Activated CD8-positive, alpha-beta T cell treated with anti-CD3 and anti-CD28 coated beads, Interleukin-2, amount 10 ng/mL, durations not matched to agents 7 days and 5 days (primary cell): ENCODE measurements at regions of chr5 and their contacts with region 1.

Region 1: GRCh38 chr5:154072414-154073171 is 33.8 kb downstream of the MFAP3 start:
- DNase-seq: peak; percentile 91
- ATAC-seq: peak; percentile 89
- H3K4me3 Mint-ChIP-seq: peak overlapping the region; percentile 47
- H3K27ac Mint-ChIP-seq: peak overlapping the region; percentile 78
- H3K4me1 Mint-ChIP-seq: peaks cover 55% of the 10 kb centered on the region
- H3K27me3 Mint-ChIP-seq: peaks cover 4% of the 10 kb centered on the region

Region 2: DNA sequence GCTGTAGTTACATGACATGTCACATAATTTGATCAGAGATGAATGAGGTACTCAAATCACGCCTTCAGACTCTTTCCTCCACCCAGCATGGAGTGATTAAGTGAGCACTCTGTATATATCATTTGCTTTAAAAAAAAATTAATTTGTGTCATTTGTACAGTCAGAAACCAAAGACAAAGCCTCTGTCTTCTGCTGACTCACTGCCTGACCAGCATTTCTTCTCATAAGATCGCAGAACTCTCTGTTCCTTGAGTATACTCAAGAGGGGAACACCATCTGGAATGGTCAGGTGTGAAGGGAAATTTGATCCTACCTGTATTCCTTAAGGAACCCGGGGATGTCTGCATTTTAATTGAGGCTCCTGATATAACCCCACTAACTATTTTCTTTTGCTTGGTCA is 288.3 kb before region 1 on chr5:
- CTCF ChIA-PET with region 1: no interaction called
- POLR2A ChIA-PET with region 1: no interaction called
- DNase-seq: no peak
- ATAC-seq: no peak
- H3K4me3 Mint-ChIP-seq: no peak overlapping the region
- H3K27ac Mint-ChIP-seq: no peak overlapping the region
- H3K4me1 Mint-ChIP-seq: no peaks in the 10 kb centered on the region
- H3K27me3 Mint-ChIP-seq: no peaks in the 10 kb centered on the region

Region 3: GRCh38 chr5:153883854-153884611 is 188.6 kb before region 1 on chr5:
- CTCF ChIA-PET with region 1: no interaction called
- POLR2A ChIA-PET with region 1: no interaction called
- DNase-seq: no peak
- ATAC-seq: no peak
- H3K4me3 Mint-ChIP-seq: no peak overlapping the region
- H3K27ac Mint-ChIP-seq: no peak overlapping the region
- H3K4me1 Mint-ChIP-seq: no peaks in the 10 kb centered on the region
- H3K27me3 Mint-ChIP-seq: no peaks in the 10 kb centered on the region

Region 4: DNA sequence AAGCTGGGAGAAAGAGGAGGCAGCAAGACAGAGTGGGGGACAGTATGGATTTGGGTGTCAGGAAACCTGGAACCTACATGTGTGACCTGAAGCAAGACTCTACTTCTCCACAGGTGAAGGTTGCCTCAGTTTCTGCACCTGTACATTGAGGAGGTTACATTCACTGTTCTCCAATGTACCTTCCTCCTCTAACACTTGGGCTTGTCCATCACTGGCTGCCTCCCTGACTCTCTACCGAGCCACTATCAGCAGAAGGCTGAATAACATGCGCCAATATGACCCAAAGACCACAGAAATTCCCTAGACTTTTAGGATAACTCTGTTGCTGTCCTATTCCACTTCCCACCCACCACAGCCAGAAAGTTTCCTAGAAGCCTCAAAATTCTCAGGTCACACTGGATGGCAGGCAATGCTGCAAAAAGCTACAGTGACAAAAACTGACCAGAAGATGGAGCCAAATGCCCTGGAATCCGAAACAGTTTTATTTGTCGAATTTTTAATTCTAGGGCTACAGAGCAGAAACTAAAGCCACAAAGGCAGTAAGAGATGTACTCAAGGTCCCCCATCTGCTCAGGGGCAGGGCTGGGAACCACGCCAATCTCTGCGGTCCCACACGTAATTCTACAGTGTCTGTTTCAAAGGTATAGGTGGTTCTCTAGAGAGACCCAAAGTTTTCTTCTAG is 98.3 kb before region 1 on chr5:
- CTCF ChIA-PET with region 1: interaction called, 42 read pairs
- POLR2A ChIA-PET with region 1: no interaction called
- DNase-seq: peak; percentile 62
- ATAC-seq: peak; percentile 69
- H3K4me3 Mint-ChIP-seq: no peak overlapping the region
- H3K27ac Mint-ChIP-seq: no peak overlapping the region
- H3K4me1 Mint-ChIP-seq: peaks cover 3% of the 10 kb centered on the region
- H3K27me3 Mint-ChIP-seq: peaks cover 9% of the 10 kb centered on the region

Region 5: DNA sequence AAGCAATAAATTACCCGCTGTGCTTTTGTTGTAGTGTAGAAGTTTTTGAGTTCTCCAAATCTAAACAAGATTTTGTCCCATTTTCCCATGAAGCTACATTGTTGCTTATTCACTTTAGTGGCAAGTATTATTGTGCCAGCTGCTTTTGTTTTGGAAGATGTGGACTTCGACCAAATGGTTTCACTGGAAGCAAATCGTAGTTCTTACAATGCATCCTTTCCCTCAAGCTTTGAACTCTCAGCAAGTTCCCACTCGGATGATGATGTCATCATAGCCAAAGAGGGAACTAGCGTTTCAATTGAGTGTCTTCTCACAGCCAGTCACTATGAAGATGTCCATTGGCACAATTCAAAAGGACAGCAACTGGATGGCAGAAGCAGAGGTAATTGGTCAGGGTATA is 23.0 kb before region 1 on chr5:
- CTCF ChIA-PET with region 1: interaction called, 15 read pairs
- POLR2A ChIA-PET with region 1: no interaction called
- DNase-seq: no peak
- ATAC-seq: no peak
- H3K4me3 Mint-ChIP-seq: no peak overlapping the region
- H3K27ac Mint-ChIP-seq: no peak overlapping the region
- H3K4me1 Mint-ChIP-seq: peaks cover 21% of the 10 kb centered on the region
- H3K27me3 Mint-ChIP-seq: no peaks in the 10 kb centered on the region

Region 6: GRCh38 chr5:154087257-154087656 is 14.7 kb after region 1 on chr5:
- CTCF ChIA-PET with region 1: interaction called, 20 read pairs
- POLR2A ChIA-PET with region 1: no interaction called
- DNase-seq: no peak
- ATAC-seq: no peak
- H3K4me3 Mint-ChIP-seq: no peak overlapping the region
- H3K27ac Mint-ChIP-seq: no peak overlapping the region
- H3K4me1 Mint-ChIP-seq: peaks cover 2% of the 10 kb centered on the region
- H3K27me3 Mint-ChIP-seq: peaks cover 21% of the 10 kb centered on the region

Region 7: DNA sequence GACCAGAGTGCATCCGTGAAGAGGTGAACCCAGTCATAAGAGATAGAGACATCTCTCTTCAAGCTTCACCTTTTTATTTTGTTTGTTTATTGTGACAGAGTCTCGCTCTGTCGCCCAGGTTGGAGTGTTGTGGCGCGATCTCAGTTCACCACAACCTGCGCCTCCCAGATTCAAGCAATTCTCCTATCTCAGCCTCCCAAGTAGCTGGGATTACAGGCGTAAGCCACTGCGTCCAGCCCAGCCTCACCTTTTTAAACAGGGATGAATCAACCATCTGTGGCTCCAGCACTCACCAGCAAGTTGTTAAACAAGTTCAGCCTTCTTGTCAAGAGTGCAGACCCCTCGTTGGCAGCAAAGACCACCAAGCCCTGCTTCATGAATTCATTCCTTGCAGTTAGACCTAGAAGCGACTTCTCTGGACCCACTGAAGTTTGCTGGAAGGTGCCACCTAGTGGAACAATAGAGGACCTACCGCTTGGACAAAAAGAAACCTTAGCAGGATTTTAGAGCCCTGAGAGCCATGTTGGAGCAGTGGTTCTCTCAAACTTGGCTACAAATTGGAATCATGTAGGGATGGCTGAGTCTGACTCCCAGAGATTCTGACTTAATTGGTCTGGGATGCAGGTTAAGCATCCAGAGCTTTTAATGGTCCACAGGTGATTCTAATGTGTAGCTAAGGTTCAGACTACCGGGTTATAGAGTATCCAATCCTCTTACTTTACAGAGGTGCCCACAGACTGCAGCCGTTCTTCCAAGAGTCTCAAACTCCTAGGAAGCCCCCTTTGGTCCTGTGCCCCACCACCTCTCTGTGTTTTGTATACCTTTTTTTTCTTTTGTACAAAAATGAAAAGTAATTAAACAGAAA is 107.5 kb after region 1 on chr5:
- CTCF ChIA-PET with region 1: interaction called, 153 read pairs
- POLR2A ChIA-PET with region 1: no interaction called
- DNase-seq: peak; percentile 62
- ATAC-seq: peak; percentile 94
- H3K4me3 Mint-ChIP-seq: no peak overlapping the region
- H3K27ac Mint-ChIP-seq: no peak overlapping the region
- H3K4me1 Mint-ChIP-seq: peaks cover 6% of the 10 kb centered on the region
- H3K27me3 Mint-ChIP-seq: peaks cover 31% of the 10 kb centered on the region

Region 8: DNA sequence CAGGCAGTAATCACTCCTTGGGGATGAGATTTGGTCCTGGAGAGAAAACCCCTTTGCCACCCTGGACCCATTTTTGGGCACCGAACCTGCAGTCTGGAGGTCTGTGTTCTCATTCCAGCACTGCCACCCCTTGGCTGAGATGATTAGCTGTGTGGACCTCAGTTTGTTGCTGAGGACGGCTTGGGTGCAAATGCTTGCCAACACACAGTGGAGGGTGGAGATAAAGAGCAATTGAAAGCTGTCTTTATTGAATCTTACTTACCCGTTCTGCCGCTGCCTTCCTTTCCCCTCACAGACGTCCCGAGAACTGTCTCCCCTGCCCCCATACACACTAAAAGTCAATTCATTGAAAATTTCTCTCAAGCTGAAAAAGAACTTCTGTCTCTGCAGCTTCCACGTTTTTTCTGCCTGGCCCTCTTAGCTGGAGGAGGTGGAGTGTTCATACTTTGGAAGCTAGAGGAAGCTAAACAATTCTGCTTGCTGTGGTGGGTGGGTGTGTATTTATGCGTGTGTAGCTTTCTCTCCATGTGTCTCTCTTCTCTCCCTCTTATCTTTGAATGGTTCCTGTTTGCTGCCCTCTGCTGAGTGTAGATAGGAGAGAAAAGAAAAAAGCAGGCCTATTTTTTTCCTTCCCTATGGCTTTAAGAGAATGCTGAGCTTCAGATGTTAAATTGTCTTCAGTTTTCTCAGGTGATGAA is 124.5 kb after region 1 on chr5:
- CTCF ChIA-PET with region 1: interaction called, 67 read pairs
- POLR2A ChIA-PET with region 1: interaction called, 3 read pairs
- DNase-seq: no peak
- ATAC-seq: no peak
- H3K4me3 Mint-ChIP-seq: no peak overlapping the region
- H3K27ac Mint-ChIP-seq: peak overlapping the region; percentile 12
- H3K4me1 Mint-ChIP-seq: peaks cover 62% of the 10 kb centered on the region
- H3K27me3 Mint-ChIP-seq: peaks cover 2% of the 10 kb centered on the region

Region 9: GRCh38 chr5:154405078-154405792 is 332.6 kb after region 1 on chr5:
- CTCF ChIA-PET with region 1: interaction called, 100 read pairs
- POLR2A ChIA-PET with region 1: interaction called, 3 read pairs
- DNase-seq: peak; percentile 81
- ATAC-seq: peak; percentile 99
- H3K4me3 Mint-ChIP-seq: peak overlapping the region; percentile 48
- H3K27ac Mint-ChIP-seq: no peak overlapping the region
- H3K4me1 Mint-ChIP-seq: peaks cover 12% of the 10 kb centered on the region
- H3K27me3 Mint-ChIP-seq: no peaks in the 10 kb centered on the region